ENCODE measurements at regions of chr14 and their contacts with region 1.

Region 1: DNA sequence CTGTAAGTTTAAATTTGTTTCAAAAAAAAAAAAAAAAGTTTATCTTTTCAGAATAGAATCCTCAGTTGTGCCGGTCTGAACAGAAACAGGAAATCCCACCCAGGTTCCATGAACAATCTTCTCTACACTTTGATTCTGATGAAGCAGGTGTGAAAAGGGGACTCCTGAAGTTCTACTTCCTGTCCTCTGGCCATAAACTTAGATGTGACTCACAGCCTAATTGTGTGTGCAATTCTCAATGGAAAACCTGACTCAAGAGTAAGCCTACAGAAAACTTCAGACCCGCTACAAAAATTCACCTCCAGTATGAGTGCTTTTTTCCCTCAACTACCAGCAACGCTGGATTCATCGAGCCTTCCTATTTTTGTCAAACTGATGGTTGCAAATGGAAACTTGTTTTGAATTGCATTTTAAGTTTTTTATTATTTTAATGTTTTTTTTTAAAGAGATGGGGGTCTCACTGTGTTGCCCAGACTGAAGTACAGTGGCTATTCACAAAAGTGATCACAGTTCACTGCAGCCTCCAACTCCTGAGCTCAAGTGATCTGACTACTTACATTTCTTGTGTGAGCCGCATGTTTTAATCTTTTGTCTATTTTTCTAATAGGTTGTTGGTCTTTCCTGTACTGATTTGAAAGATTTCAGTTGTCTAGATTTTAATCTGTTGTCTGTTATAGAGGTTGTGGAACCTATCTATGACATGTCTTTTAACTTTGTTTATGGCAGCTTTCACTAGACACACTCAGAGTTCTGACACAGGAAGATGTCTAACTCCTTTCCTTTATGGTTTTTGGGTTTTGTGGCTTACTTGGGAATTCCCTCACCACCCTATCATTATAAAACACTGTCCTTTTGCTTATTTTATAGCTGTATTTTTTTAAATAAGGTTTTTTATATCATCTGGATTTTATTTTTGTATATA is 37.6 kb downstream of the ATG14 start:
- DNase-seq: peak; percentile 39
- ATAC-seq: peak; percentile 88
- H3K4me3 Mint-ChIP-seq: peak overlapping the region; percentile 45
- H3K27ac Mint-ChIP-seq: peak overlapping the region; percentile 96
- H3K4me1 Mint-ChIP-seq: peaks cover 46% of the 10 kb centered on the region
- H3K27me3 Mint-ChIP-seq: no peaks in the 10 kb centered on the region

Region 2: DNA sequence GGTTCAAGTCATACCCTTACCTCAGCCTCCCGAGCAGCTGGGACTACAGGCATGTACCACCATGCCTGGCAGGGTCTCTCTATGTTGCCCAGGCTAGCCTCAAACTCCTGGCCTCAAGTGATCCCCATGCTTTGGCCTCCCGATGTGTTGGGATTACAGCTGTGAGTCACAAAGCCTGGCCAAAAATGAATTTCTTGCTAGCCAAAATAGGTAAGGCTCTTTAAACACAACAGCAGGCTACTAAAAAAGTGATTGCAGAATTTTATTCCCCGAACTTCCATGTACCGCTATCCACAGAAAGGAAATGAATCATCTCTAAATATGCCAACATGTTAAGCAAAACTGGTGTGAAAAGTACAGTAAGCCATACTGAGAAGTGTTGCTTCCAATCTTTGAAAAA is 397.7 kb before region 1 on chr14:
- CTCF ChIA-PET with region 1: no interaction called
- POLR2A ChIA-PET with region 1: no interaction called
- intact Hi-C with region 1: no loop called
- DNase-seq: no peak
- ATAC-seq: no peak
- H3K4me3 Mint-ChIP-seq: no peak overlapping the region
- H3K27ac Mint-ChIP-seq: no peak overlapping the region
- H3K4me1 Mint-ChIP-seq: peaks cover 3% of the 10 kb centered on the region
- H3K27me3 Mint-ChIP-seq: no peaks in the 10 kb centered on the region

Region 3: DNA sequence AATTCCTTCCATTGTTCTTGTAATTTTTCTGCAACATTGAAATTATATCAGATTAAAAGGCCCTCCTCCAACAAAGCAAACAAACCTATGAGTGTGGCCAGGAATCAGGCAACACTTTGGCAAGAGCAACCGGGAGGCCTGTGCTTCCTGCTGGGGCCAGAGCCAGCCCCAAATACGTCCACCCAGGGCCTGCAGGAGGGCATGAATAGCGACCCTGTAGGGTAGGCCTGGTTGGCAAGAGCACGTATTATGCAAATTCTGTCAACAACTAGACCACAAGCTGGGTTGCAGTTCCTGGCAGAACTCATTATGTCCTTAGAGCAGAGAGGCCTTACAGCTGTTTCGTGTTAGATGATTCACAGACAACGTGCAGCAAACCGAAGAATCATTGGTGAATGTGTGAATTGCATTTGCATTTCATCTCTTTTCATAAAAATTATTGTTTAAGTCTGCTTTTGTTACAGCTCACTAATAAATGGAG is 271.9 kb before region 1 on chr14:
- CTCF ChIA-PET with region 1: no interaction called
- POLR2A ChIA-PET with region 1: no interaction called
- intact Hi-C with region 1: loop called in 1 of 2 experiments (anchors 10 kb)
- DNase-seq: peak; percentile 72
- ATAC-seq: peak; percentile 62
- H3K4me3 Mint-ChIP-seq: peak overlapping the region; percentile 49
- H3K27ac Mint-ChIP-seq: peak overlapping the region; percentile 89
- H3K4me1 Mint-ChIP-seq: peaks cover 43% of the 10 kb centered on the region
- H3K27me3 Mint-ChIP-seq: no peaks in the 10 kb centered on the region

Region 4: GRCh38 chr14:55339770-55340169 is 34.3 kb before region 1 on chr14:
- CTCF ChIA-PET with region 1: interaction called, 3 read pairs
- POLR2A ChIA-PET with region 1: no interaction called
- intact Hi-C with region 1: loop called in 1 of 2 experiments (anchors 2 kb)
- DNase-seq: peak; percentile 61
- ATAC-seq: peak; percentile 53
- H3K4me3 Mint-ChIP-seq: no peak overlapping the region
- H3K27ac Mint-ChIP-seq: peak overlapping the region; percentile 29
- H3K4me1 Mint-ChIP-seq: peaks cover 78% of the 10 kb centered on the region
- H3K27me3 Mint-ChIP-seq: no peaks in the 10 kb centered on the region

Region 5: GRCh38 chr14:55389330-55389729 is 15.3 kb after region 1 on chr14:
- CTCF ChIA-PET with region 1: interaction called, 8 read pairs
- POLR2A ChIA-PET with region 1: interaction called, 4 read pairs
- intact Hi-C with region 1: loop called (anchors 1 kb)
- DNase-seq: no peak
- ATAC-seq: no peak
- H3K4me3 Mint-ChIP-seq: no peak overlapping the region
- H3K27ac Mint-ChIP-seq: no peak overlapping the region
- H3K4me1 Mint-ChIP-seq: peaks cover 44% of the 10 kb centered on the region
- H3K27me3 Mint-ChIP-seq: no peaks in the 10 kb centered on the region

Region 6: DNA sequence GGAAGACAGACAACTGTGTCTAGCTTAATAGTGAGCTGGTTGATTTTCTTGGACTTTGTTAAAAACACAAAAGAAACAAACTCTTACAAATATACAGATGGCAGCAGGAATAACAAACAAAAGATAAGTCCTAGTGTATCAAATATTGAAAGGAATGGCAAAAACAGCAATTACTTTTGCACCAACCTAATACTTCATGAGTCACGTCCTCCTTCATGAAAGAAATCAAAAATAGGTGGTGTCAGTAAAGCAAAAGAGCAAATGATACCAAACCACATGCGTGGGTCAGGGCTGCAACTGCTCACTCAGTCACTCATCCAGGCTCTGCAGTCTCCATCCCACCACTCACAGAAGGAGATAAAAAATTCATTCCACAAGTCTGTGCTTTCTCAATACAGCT is 25.8 kb after region 1 on chr14:
- CTCF ChIA-PET with region 1: no interaction called
- POLR2A ChIA-PET with region 1: no interaction called
- intact Hi-C with region 1: no loop called
- DNase-seq: peak; percentile 26
- ATAC-seq: peak; percentile 50
- H3K4me3 Mint-ChIP-seq: no peak overlapping the region
- H3K27ac Mint-ChIP-seq: no peak overlapping the region
- H3K4me1 Mint-ChIP-seq: peaks cover 37% of the 10 kb centered on the region
- H3K27me3 Mint-ChIP-seq: no peaks in the 10 kb centered on the region

Region 7: GRCh38 chr14:55440385-55440784 is 66.3 kb after region 1 on chr14 and contains the start of gene TBPL2:
- CTCF ChIA-PET with region 1: no interaction called
- POLR2A ChIA-PET with region 1: no interaction called
- intact Hi-C with region 1: no loop called
- DNase-seq: peak; percentile 24
- ATAC-seq: no peak
- H3K4me3 Mint-ChIP-seq: no peak within 1 kb of the TSS
- H3K27ac Mint-ChIP-seq: no peak within 1 kb of the TSS
- H3K4me1 Mint-ChIP-seq: no peaks in the 10 kb centered on the region
- H3K27me3 Mint-ChIP-seq: no peaks in the 10 kb centered on the region
- total RNA-seq, gene TBPL2: not detected

Region 8: GRCh38 chr14:55477680-55478079 is 103.6 kb after region 1 on chr14:
- CTCF ChIA-PET with region 1: no interaction called
- POLR2A ChIA-PET with region 1: no interaction called
- intact Hi-C with region 1: no loop called
- DNase-seq: no peak
- ATAC-seq: no peak
- H3K4me3 Mint-ChIP-seq: no peak overlapping the region
- H3K27ac Mint-ChIP-seq: no peak overlapping the region
- H3K4me1 Mint-ChIP-seq: no peaks in the 10 kb centered on the region
- H3K27me3 Mint-ChIP-seq: no peaks in the 10 kb centered on the region

Region 9: GRCh38 chr14:57268161-57269069 is 1894.4 kb after region 1 on chr14 and contains the starts of genes AP5M1 and EXOC5:
- CTCF ChIA-PET with region 1: no interaction called
- POLR2A ChIA-PET with region 1: no interaction called
- intact Hi-C with region 1: loop called in 1 of 2 experiments (anchors 5 kb)
- DNase-seq: peak; percentile 96
- ATAC-seq: peak; percentile 93
- H3K4me3 Mint-ChIP-seq: peak within 1 kb of the TSS; percentile 90
- H3K27ac Mint-ChIP-seq: peak within 1 kb of the TSS; percentile 99
- H3K4me1 Mint-ChIP-seq: peaks cover 53% of the 10 kb centered on the region
- H3K27me3 Mint-ChIP-seq: no peaks in the 10 kb centered on the region
- total RNA-seq, gene AP5M1: 30.8 to 32.7 TPM
- total RNA-seq, gene EXOC5: 66.5 to 80.2 TPM